ENCODE measurements at regions of chr2 and their contacts with region 1.

Region 1: DNA sequence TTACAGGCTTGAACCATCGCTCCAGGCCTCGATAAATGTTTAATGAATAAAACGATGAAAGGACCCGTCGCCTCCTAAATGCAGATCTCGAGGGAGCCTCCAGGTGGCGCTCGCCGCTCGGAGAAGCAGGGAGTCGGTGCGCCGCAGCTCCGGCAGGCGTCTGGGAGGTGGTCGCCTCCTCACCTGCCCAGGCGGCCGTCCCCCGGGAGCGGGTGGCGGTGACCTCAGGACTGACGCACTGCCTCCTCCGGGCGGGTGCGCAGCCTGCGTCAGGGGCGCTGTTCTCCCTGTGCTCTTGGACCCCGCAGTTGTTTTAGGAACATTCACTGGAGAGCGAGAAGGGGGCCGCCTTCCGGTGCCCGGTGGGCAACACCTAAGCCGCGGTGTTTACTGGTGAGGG is 38.6 kb upstream of the POLE4 start:
- DNase-seq: peak; percentile 80
- H3K4me3 Mint-ChIP-seq: peak overlapping the region; percentile 41
- H3K27ac Mint-ChIP-seq: no peak overlapping the region
- H3K4me1 Mint-ChIP-seq: peaks cover 5% of the 10 kb centered on the region
- H3K27me3 Mint-ChIP-seq: peaks cover 3% of the 10 kb centered on the region

Region 2: GRCh38 chr2:74982577-74982976 is 62.8 kb after region 1 on chr2:
- CTCF ChIA-PET with region 1: interaction called, 3 read pairs
- intact Hi-C with region 1: loop called (anchors 2 kb)
- DNase-seq: no peak
- H3K4me3 Mint-ChIP-seq: no peak overlapping the region
- H3K27ac Mint-ChIP-seq: no peak overlapping the region
- H3K4me1 Mint-ChIP-seq: peaks cover 7% of the 10 kb centered on the region
- H3K27me3 Mint-ChIP-seq: no peaks in the 10 kb centered on the region

Region 3: GRCh38 chr2:75053484-75054112 is 133.8 kb after region 1 on chr2:
- CTCF ChIA-PET with region 1: no interaction called
- intact Hi-C with region 1: loop called (anchors 5 kb)
- DNase-seq: peak; percentile 22
- H3K4me3 Mint-ChIP-seq: no peak overlapping the region
- H3K27ac Mint-ChIP-seq: no peak overlapping the region
- H3K4me1 Mint-ChIP-seq: no peaks in the 10 kb centered on the region
- H3K27me3 Mint-ChIP-seq: no peaks in the 10 kb centered on the region

Region 4: GRCh38 chr2:75064691-75065396 is 145.0 kb after region 1 on chr2:
- CTCF ChIA-PET with region 1: interaction called, 22 read pairs
- intact Hi-C with region 1: loop called (anchors 2 kb)
- DNase-seq: peak; percentile 61
- H3K4me3 Mint-ChIP-seq: no peak overlapping the region
- H3K27ac Mint-ChIP-seq: no peak overlapping the region
- H3K4me1 Mint-ChIP-seq: no peaks in the 10 kb centered on the region
- H3K27me3 Mint-ChIP-seq: no peaks in the 10 kb centered on the region

Region 5: DNA sequence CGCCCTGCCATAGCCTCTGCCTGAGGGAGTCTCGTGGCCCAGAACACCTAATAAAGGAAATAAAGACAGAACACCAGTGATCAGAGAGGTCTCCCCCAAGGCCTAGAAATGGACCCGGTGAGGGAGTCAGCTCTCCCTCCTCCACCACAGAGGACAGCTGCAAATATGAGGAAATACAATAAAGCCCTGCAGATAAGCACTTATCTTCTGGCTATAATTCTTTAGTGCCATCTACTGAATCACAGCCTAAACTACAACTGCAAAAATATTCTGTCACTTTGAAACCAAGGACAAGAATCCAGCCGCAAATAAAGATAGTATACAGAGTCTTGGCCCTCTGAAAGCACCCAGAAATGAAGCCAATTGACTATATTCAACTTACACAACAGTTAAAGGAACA is 321.9 kb after region 1 on chr2:
- CTCF ChIA-PET with region 1: no interaction called
- intact Hi-C with region 1: loop called (anchors 5 kb)
- DNase-seq: no peak
- H3K4me3 Mint-ChIP-seq: no peak overlapping the region
- H3K27ac Mint-ChIP-seq: no peak overlapping the region
- H3K4me1 Mint-ChIP-seq: no peaks in the 10 kb centered on the region
- H3K27me3 Mint-ChIP-seq: no peaks in the 10 kb centered on the region

Region 6: DNA sequence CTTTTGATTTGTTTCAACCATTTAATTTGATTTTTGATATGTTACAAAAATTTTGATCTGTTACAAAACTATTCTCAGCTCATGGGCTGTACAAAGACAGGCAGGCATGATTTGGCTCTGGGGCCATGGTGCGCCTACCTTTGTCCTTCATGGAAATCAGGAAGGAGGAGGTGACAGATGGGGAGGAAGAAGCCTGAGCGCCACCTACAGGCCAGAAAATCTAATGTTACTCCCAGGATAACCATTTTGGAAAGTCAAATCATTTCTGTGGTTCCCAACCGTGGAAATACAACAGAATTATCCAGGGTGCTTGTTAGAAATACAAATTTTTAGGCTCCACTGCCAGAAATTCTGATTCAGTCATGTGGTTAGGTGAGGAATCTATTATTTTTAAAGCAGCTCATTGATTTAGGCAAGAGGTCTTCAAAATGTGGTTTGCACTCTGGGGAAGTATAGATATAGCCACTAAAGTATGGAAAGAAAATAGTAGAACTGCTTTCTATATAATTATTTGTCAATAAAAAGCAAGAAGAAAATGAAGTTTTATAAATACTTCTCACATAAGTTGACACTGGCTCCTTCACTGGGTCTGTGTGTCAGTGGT is 547.0 kb after region 1 on chr2:
- CTCF ChIA-PET with region 1: no interaction called
- intact Hi-C with region 1: loop called (anchors 5 kb)
- DNase-seq: peak; percentile 38
- H3K4me3 Mint-ChIP-seq: no peak overlapping the region
- H3K27ac Mint-ChIP-seq: no peak overlapping the region
- H3K4me1 Mint-ChIP-seq: no peaks in the 10 kb centered on the region
- H3K27me3 Mint-ChIP-seq: peaks cover 24% of the 10 kb centered on the region

Region 7: DNA sequence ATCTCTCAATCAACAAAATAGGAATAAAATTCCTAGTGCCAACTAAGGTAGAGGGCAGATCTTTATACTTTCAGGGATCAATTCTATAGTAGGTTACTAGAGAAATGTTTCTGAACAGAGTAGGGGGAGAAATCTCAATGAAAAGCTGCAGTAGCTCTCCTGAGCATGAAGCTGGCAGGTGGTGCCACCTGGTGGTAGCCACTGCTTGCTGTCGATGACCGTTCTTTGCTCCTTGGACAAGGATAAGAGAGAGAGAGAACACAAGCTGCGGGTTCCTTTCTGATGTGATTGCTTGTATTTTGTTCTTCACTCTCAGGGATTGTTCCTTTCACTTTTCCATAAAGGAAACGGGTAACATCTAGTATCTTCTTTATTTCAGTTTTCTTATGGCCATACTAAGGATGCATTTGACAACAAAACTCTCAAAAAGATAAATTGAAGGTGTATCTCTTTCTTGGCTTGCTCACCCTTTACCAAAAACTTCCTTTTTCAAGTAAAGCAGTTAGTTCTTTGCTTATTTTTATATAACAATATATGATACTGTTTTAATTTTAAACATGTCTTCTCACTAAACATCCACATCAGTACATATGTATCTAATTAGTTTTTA is 708.2 kb after region 1 on chr2:
- CTCF ChIA-PET with region 1: no interaction called
- intact Hi-C with region 1: loop called (anchors 5 kb)
- DNase-seq: peak; percentile 79
- H3K4me3 Mint-ChIP-seq: no peak overlapping the region
- H3K27ac Mint-ChIP-seq: no peak overlapping the region
- H3K4me1 Mint-ChIP-seq: no peaks in the 10 kb centered on the region
- H3K27me3 Mint-ChIP-seq: peaks cover 18% of the 10 kb centered on the region